ENCODE measurements at regions of chr5 and their contacts with region 1.

Region 1: DNA sequence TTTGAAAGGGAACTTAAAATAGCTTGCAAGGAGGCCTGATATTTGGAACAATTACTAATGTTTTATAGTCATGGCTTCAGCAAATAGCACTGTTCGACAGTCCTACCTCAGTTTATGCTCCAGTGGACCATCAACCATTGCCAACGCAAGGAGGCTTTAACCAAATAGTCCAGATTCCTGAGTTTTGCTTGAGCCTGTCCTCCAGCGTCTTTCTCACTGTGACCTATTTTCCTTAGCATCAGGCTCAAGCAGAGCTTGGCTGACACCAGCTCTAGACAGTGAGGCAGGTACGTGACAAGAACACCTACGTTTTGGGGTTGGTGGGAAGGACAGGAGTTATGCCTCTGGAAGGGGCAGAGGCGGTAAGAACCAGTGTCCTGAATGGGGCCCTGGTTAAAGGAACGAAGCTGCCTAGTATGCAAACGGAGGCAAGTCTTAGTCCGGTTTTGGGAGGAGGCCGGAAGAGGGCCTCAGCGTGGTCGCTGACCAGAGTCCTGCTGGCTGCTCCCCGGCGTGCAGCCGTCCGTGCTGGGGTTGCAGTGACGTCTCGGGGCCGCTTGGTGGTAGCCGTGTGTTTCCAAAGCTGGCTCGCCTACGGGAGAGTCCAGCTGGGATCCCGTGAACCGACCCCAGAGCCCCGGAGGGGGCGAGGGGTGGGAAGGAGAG is 998 bp upstream of the FGF18 start:
- DNase-seq: peak; percentile 74
- H3K4me3 Mint-ChIP-seq: peak overlapping the region; percentile 52
- H3K27ac Mint-ChIP-seq: no peak overlapping the region
- H3K4me1 Mint-ChIP-seq: peaks cover 12% of the 10 kb centered on the region
- H3K27me3 Mint-ChIP-seq: peaks cover 14% of the 10 kb centered on the region

Region 2: DNA sequence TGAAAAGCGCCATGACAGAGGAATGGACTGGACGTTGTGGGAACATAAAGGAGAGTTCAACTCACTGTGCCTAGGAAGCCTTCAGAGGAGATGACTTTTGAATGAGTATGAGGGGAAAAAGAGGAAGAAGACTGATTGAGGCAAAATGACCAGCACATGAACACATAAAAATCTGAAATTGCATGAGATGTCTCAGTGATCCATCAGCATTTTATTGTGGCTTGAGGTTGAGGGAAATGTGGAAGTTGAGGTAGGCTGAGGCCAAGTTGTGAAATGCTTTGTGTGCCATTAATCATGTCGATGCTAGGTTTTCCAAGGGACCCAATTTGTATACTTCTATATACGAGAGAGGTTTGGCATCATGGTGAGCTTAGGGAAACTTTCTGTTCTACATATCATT is 250.3 kb before region 1 on chr5:
- CTCF ChIA-PET with region 1: no interaction called
- POLR2A ChIA-PET with region 1: no interaction called
- intact Hi-C with region 1: no loop called
- DNase-seq: no peak
- H3K4me3 Mint-ChIP-seq: no peak overlapping the region
- H3K27ac Mint-ChIP-seq: no peak overlapping the region
- H3K4me1 Mint-ChIP-seq: no peaks in the 10 kb centered on the region
- H3K27me3 Mint-ChIP-seq: no peaks in the 10 kb centered on the region

Region 3: DNA sequence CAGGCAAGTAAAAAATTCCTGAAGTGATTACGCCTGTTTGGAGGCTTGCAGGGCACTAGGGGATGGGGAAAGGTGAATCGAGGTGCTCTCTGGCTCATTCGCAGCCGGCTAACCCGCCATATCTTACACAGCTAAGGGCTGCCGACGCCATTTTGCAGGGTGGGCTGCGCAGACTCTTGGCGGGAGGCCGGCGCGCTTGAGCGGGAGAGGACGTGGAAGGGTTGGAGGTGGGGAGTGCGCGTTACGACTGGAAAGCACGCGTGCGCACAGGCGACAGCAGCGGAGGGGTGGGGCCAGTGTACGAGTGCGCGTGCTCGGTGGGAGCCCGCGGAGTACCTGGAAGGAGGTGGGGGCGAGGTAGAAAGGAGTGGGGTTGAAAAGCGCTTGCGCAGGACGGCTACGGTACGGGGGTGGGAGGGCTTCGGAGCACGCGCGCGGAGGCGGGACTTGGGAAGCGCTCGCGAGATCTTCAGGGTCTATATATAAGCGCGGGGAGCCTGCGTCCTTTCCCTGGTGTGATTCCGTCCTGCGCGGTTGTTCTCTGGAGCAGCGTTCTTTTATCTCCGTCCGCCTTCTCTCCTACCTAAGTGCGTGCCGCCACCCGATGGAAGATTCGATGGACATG is 31.0 kb before region 1 on chr5 and contains the start of gene NPM1:
- CTCF ChIA-PET with region 1: interaction called, 6 read pairs
- POLR2A ChIA-PET with region 1: interaction called, 7 read pairs
- intact Hi-C with region 1: loop called (anchors 2 kb)
- DNase-seq: peak; percentile 98
- H3K4me3 Mint-ChIP-seq: peak within 1 kb of the TSS; percentile 93
- H3K27ac Mint-ChIP-seq: peak within 1 kb of the TSS; percentile 96
- H3K4me1 Mint-ChIP-seq: peaks cover 39% of the 10 kb centered on the region
- H3K27me3 Mint-ChIP-seq: peaks cover 3% of the 10 kb centered on the region
- total RNA-seq, gene NPM1: 2,483 to 2,592 TPM

Region 4: DNA sequence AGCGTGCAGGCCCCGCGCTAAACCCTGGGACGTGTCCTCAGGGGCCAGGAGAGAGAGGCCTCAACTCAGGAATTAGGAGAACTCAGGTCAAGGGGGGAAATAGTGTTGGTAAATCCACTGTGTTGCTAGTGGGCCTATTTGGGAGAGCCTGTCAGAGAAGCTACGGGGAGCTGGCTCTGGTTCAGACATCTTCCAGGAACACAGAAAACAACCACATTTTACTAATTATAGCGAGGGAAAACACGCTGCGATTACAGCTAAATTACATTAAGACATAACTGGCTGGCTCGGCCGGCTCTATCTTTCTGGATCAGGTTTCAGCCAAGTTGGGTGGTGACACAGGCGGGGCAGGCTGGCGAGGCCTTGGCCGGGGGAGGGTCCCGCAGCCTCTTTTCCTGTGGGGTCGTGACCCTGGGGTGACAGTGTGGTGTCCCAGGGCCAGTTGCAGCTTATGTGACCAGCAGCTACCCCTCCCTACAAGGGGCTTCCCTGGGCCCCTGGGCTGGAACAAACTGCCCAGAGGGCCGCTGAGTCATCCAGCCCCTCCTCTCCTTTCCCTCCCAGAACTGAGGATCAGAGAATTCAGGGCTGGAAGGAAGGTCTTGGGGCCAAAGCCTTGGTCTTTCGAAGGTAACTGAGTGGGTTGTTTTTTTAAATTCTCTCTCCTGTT is 76.1 kb after region 1 on chr5:
- CTCF ChIA-PET with region 1: no interaction called
- POLR2A ChIA-PET with region 1: no interaction called
- intact Hi-C with region 1: no loop called
- DNase-seq: no peak
- H3K4me3 Mint-ChIP-seq: no peak overlapping the region
- H3K27ac Mint-ChIP-seq: no peak overlapping the region
- H3K4me1 Mint-ChIP-seq: no peaks in the 10 kb centered on the region
- H3K27me3 Mint-ChIP-seq: peaks cover 8% of the 10 kb centered on the region

Region 5: DNA sequence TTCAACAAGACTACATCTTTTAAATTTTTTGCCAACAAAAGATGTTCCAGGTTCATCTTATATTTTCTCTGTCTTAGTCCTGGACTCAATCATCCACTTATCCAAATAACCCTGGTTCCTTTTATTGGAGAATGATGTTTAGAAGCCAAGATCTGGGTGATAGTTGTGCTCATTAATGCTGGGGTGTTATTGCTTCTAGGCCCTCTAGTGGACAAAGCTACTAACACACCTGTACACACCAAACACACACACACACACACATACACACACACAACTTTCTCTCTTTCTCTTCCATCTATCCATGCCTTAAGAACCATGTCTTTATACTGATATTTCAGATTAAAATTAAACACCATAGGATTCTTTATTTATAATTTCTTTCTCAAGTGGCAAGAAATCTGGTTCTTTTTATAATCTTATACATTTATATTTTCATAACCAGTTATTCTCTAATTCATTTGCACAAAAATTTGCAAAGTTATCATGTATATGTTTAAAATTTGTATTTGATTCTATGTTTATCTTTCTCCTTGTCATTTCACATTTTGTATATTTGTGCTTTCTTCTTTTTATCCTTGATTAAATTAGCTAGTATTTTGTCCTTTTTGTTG is 188.1 kb after region 1 on chr5:
- CTCF ChIA-PET with region 1: interaction called, 5 read pairs
- POLR2A ChIA-PET with region 1: interaction called, 4 read pairs
- intact Hi-C with region 1: loop called (anchors 10 kb)
- DNase-seq: no peak
- H3K4me3 Mint-ChIP-seq: no peak overlapping the region
- H3K27ac Mint-ChIP-seq: no peak overlapping the region
- H3K4me1 Mint-ChIP-seq: peaks cover 3% of the 10 kb centered on the region
- H3K27me3 Mint-ChIP-seq: peaks cover 26% of the 10 kb centered on the region

Region 6: GRCh38 chr5:171858303-171858702 is 439.9 kb after region 1 on chr5:
- CTCF ChIA-PET with region 1: interaction called, 11 read pairs
- POLR2A ChIA-PET with region 1: no interaction called
- intact Hi-C with region 1: no loop called
- DNase-seq: no peak
- H3K4me3 Mint-ChIP-seq: no peak overlapping the region
- H3K27ac Mint-ChIP-seq: no peak overlapping the region
- H3K4me1 Mint-ChIP-seq: no peaks in the 10 kb centered on the region
- H3K27me3 Mint-ChIP-seq: no peaks in the 10 kb centered on the region

Region 7: DNA sequence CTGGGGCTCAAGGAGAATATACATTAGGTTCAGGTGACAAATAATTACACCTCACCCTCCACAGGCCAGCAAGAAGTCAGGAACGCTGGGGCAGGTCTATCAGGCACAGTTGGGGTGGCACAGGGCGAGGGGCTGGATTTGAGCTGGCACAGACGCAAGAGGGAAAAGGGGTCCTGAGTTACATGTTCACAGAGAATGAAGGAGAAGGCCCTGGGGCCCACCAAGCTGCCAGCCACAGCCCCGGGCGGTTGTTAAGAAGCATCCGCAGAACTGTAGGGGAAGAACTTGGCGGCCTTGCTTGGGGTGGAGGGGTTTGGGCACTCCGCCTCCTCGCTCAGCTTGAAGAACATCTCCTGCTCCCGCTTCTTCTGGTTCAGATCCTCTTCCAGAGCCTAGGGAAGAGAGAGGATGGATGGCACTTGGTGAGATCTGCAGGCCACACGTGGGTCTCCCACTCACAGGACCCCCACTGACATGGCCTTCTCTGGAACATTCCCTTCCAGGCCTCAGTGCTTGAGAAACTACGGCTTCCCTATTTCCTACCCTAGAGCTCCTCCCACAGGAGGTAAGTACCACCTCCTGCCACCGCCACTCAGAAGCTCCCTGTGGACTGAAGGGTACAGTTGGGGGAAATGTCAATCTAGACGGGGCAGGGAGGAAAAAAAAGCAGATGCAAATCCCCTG is 626.3 kb after region 1 on chr5:
- CTCF ChIA-PET with region 1: interaction called, 3 read pairs
- POLR2A ChIA-PET with region 1: no interaction called
- intact Hi-C with region 1: loop called (anchors 10 kb)
- DNase-seq: no peak
- H3K4me3 Mint-ChIP-seq: no peak overlapping the region
- H3K27ac Mint-ChIP-seq: no peak overlapping the region
- H3K4me1 Mint-ChIP-seq: peaks cover 27% of the 10 kb centered on the region
- H3K27me3 Mint-ChIP-seq: no peaks in the 10 kb centered on the region